Activated B cell treated with CpG ODN at 0.5 μM for 24 hours (primary cell): ENCODE measurements at regions of chr2 and their contacts with region 1.

Region 1: GRCh38 chr2:156400706-156401678 is 35.2 kb upstream of the GPD2 start:
- DNase-seq: peak; percentile 67
- ATAC-seq: peak; percentile 74
- H3K4me3 Mint-ChIP-seq: peak overlapping the region; percentile 96
- H3K27ac Mint-ChIP-seq: peak overlapping the region; percentile 99
- H3K4me1 Mint-ChIP-seq: peaks cover 29% of the 10 kb centered on the region
- H3K27me3 Mint-ChIP-seq: peaks cover 6% of the 10 kb centered on the region
- CTCF ChIP-seq: no peak

Region 2: DNA sequence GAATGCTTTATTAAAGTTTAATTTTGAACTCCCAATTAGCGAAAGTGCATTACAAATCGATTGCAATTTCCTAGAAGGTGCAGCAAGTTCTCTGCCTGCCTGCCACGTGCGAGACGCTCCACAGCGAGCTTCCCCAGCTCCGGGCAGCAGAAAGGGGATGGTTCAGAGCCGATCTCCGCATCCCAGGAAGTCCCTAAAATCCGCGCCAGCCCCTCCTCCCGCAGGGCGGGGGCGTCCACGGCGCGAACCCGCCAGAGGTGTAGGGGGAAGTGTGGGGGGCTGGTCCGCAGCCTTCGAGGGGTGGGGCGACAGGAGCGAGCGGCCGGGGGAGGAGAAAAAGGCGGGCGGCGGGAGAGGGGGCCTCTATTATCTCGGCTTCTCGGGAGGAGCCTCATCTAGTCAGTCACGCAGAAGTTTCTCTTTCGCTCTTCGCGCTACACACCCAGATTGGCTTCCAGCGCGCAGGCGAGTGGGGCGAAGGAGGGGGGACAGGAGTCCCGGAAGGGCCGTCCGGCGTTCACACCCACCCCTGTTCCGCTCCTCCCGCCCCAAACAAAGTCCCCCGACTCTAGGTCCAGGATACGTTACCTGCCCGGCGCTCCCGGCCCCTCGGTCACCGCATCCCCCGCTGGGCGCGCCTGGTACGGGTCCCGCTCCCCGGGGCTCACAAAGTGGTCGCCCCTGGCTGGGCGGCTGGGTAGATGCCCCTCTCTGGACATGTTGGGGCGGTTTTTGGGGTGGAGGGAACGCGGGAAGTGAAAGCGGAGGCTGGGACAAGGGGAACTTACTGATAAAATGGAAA is 59.3 kb before region 1 on chr2:
- CTCF ChIA-PET with region 1: interaction called, 17 read pairs
- POLR2A ChIA-PET with region 1: interaction called, 63 read pairs
- intact Hi-C with region 1: loop called (anchors 1 kb)
- DNase-seq: peak; percentile 80
- ATAC-seq: peak; percentile 79
- H3K4me3 Mint-ChIP-seq: peak overlapping the region; percentile 92
- H3K27ac Mint-ChIP-seq: peak overlapping the region; percentile 96
- H3K4me1 Mint-ChIP-seq: peaks cover 23% of the 10 kb centered on the region
- H3K27me3 Mint-ChIP-seq: no peaks in the 10 kb centered on the region
- CTCF ChIP-seq: no peak

Region 3: DNA sequence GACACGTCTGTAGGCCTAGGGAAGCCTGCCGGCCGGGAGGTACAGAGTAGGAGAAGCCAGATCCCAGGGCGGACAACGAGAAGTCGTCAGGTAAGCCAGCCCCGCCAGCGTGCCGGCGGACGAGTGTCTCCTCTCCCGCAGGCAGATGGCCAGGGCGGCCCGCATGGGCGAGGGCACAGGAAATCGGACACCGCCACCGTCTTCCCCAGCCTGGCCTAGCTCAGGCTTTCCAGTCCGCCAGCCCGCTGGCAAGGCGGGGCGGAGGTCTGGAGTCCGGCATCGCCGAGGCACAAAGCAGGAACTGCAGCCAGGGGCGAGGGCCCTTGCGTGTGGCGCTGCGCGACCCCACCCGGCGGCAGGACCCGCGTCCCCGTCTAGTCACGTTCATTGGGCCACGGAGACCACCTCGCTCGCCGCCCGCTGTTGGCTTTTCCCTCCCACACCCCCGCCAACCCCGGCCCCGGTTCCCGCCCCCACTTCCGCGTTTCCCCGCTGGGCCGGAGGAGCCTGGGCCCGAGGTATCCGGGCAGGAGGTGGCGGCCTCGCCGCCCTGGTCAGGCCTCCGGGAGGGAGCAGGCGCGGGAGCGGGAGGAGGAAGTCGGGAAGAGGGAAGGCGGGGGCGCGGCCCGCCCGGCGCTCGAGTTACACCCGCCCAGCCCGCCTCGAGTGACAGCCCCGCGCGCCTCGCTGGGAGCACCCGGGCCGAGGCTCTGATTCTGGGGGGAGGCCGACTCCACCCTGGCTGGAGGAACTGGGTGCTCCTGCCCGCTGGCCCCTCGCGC is 34.9 kb after region 1 on chr2 and contains the start of gene GPD2:
- CTCF ChIA-PET with region 1: no interaction called
- POLR2A ChIA-PET with region 1: interaction called, 25 read pairs
- intact Hi-C with region 1: loop called (anchors 1 kb)
- DNase-seq: peak; percentile 72
- ATAC-seq: peak; percentile 79
- H3K4me3 Mint-ChIP-seq: peak within 1 kb of the TSS; percentile 95
- H3K27ac Mint-ChIP-seq: peak within 1 kb of the TSS; percentile 90
- H3K4me1 Mint-ChIP-seq: peaks cover 31% of the 10 kb centered on the region
- H3K27me3 Mint-ChIP-seq: no peaks in the 10 kb centered on the region
- CTCF ChIP-seq: no peak
- total RNA-seq, gene GPD2: 17.8 and 18.3 TPM in 2 replicates

Region 4: GRCh38 chr2:156452971-156453370 is 52.0 kb after region 1 on chr2:
- CTCF ChIA-PET with region 1: no interaction called
- POLR2A ChIA-PET with region 1: no interaction called
- intact Hi-C with region 1: no loop called
- DNase-seq: no peak
- ATAC-seq: no peak
- H3K4me3 Mint-ChIP-seq: no peak overlapping the region
- H3K27ac Mint-ChIP-seq: no peak overlapping the region
- H3K4me1 Mint-ChIP-seq: peaks cover 37% of the 10 kb centered on the region
- H3K27me3 Mint-ChIP-seq: no peaks in the 10 kb centered on the region
- CTCF ChIP-seq: no peak

Region 5: GRCh38 chr2:156472686-156473085 is 71.7 kb after region 1 on chr2:
- CTCF ChIA-PET with region 1: no interaction called
- POLR2A ChIA-PET with region 1: no interaction called
- intact Hi-C with region 1: loop called (anchors 2 kb)
- DNase-seq: no peak
- ATAC-seq: peak; percentile 76
- H3K4me3 Mint-ChIP-seq: no peak overlapping the region
- H3K27ac Mint-ChIP-seq: no peak overlapping the region
- H3K4me1 Mint-ChIP-seq: peaks cover 45% of the 10 kb centered on the region
- H3K27me3 Mint-ChIP-seq: no peaks in the 10 kb centered on the region
- CTCF ChIP-seq: no peak

Region 6: GRCh38 chr2:156526950-156527636 is 126.1 kb after region 1 on chr2:
- CTCF ChIA-PET with region 1: no interaction called
- POLR2A ChIA-PET with region 1: no interaction called
- intact Hi-C with region 1: loop called (anchors 1 kb)
- DNase-seq: no peak
- ATAC-seq: peak; percentile 83
- H3K4me3 Mint-ChIP-seq: peak overlapping the region; percentile 38
- H3K27ac Mint-ChIP-seq: peak overlapping the region; percentile 41
- H3K4me1 Mint-ChIP-seq: peaks cover 9% of the 10 kb centered on the region
- H3K27me3 Mint-ChIP-seq: no peaks in the 10 kb centered on the region
- CTCF ChIP-seq: no peak

Region 7: GRCh38 chr2:156538083-156538504 is 137.1 kb after region 1 on chr2:
- CTCF ChIA-PET with region 1: no interaction called
- POLR2A ChIA-PET with region 1: interaction called, 9 read pairs
- intact Hi-C with region 1: loop called (anchors 1 kb)
- DNase-seq: no peak
- ATAC-seq: peak; percentile 82
- H3K4me3 Mint-ChIP-seq: peak overlapping the region; percentile 67
- H3K27ac Mint-ChIP-seq: peak overlapping the region; percentile 85
- H3K4me1 Mint-ChIP-seq: peaks cover 34% of the 10 kb centered on the region
- H3K27me3 Mint-ChIP-seq: no peaks in the 10 kb centered on the region
- CTCF ChIP-seq: no peak

Region 8: GRCh38 chr2:156548413-156548812 is 147.4 kb after region 1 on chr2:
- CTCF ChIA-PET with region 1: no interaction called
- POLR2A ChIA-PET with region 1: no interaction called
- intact Hi-C with region 1: no loop called
- DNase-seq: no peak
- ATAC-seq: no peak
- H3K4me3 Mint-ChIP-seq: no peak overlapping the region
- H3K27ac Mint-ChIP-seq: no peak overlapping the region
- H3K4me1 Mint-ChIP-seq: no peaks in the 10 kb centered on the region
- H3K27me3 Mint-ChIP-seq: no peaks in the 10 kb centered on the region
- CTCF ChIP-seq: no peak

Region 9: DNA sequence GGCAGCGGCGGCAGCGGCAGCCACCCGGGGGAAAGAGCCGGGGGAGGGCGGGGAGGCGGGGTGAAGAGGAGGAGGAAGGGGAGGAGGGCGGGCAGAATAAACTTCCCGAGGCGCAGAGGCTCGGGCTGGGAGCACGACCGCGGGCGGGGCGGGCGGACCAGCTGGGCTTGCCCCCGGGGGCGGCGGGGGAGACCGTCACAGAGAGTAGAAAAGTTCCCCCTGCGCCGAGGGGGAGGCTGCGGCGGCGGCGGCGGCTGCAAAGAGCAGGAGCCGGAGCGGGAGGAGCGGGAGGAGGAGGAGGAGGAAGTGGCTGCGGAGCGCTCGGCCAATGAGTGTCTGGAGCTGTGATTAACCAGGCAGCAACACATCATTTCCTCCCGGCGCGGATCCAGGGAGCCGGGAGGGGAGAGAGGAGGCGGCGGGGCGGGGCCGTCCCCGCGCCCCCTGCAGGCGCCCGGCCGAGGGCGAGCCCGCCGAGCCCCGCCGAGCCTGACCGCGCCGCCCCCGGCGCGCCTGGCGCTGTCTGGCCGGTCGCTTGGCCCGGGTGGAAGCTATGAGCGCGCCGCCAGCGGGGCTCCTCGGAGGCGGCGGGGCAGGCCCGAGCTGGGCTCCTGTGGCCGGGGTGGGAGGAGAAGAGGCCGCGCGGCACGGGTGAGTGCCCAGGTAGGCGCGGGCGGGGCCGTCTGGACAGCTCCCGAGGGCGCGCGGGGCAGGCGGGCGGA is 1475.2 kb after region 1 on chr2 and contains the start of gene ACVR1:
- CTCF ChIA-PET with region 1: no interaction called
- POLR2A ChIA-PET with region 1: no interaction called
- intact Hi-C with region 1: loop called (anchors 10 kb)
- DNase-seq: peak; percentile 76
- ATAC-seq: peak; percentile 80
- H3K4me3 Mint-ChIP-seq: peak within 1 kb of the TSS; percentile 88
- H3K27ac Mint-ChIP-seq: peak within 1 kb of the TSS; percentile 76
- H3K4me1 Mint-ChIP-seq: peaks cover 21% of the 10 kb centered on the region
- H3K27me3 Mint-ChIP-seq: no peaks in the 10 kb centered on the region
- CTCF ChIP-seq: no peak
- total RNA-seq, gene ACVR1: 4.4 and 4.6 TPM in 2 replicates